ENCODE measurements at regions of chr19 and their contacts with region 1.

Region 1: DNA sequence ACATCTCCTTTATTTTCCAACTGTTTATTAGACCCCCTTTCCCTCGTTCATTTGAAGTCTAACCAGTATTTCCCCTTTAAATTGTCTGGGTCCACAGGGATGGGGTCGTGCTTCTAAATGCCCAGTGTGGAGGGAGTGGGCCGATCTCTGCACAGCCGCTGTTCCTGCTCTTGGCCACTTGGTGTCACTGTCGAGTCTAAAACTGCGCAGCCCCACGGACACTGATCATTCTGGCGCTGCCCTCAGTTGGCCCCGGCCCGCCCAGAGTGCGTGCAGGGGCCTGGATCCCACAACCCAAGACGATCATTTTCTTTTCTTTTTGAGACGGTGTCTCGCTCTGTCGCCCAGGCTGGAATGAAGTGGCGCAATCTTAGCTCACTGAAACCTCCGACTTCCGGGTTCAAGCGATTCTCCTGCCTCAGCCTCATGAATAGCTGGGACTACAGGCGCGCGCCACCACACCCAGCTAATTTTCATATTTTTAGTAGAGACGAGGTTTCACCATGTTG is 12.0 kb downstream of the WDR88 start:
- DNase-seq: peak; percentile 71
- H3K4me3 Mint-ChIP-seq: peak overlapping the region; percentile 4
- H3K27ac Mint-ChIP-seq: no peak overlapping the region
- H3K4me1 Mint-ChIP-seq: peaks cover 7% of the 10 kb centered on the region
- H3K27me3 Mint-ChIP-seq: peaks cover 48% of the 10 kb centered on the region
- CTCF ChIP-seq: peak; percentile 96

Region 2: DNA sequence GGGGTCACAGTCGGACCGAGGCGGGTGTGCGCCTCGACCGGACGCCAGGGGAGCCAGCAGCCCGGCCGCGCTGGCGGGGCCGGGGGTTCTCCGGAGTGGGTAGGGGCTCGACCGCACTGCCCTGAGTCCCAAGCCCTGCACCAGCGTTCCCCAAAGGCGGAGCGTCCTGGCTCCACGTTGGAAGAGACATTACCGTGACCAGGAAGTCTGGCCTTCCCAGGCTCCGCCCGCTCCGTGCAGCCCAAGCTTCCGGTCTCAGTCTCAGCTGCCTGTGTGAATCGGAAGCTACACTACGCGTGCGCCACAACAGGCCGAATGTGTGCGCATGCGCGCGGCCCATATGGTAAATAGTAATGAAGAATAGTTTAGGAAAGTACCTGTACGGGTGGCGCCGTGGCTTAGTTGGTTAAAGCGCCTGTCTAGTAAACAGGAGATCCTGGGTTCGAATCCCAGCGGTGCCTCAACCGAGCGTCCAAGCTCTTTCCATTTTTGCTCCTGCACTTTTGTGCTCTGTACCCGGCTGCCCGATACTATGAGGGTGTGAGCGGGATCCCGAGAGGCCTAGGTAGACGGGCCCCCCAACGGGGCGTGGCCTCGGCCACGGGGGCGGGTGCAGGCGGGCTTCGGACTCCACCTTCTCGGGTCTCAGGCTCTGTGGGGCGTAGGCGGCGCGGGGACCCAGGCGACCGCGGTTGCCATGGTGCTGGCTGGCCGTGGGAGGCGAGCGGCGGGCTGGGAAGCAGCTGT is 32.9 kb after region 1 on chr19:
- CTCF ChIA-PET with region 1: interaction called, 10 read pairs
- intact Hi-C with region 1: no loop called
- DNase-seq: peak; percentile 100
- H3K4me3 Mint-ChIP-seq: peak overlapping the region; percentile 97
- H3K27ac Mint-ChIP-seq: peak overlapping the region; percentile 100
- H3K4me1 Mint-ChIP-seq: peaks cover 39% of the 10 kb centered on the region
- H3K27me3 Mint-ChIP-seq: peaks cover 15% of the 10 kb centered on the region
- CTCF ChIP-seq: peak; percentile 26

Region 3: GRCh38 chr19:33186431-33187182 is 42.7 kb after region 1 on chr19:
- CTCF ChIA-PET with region 1: interaction called, 11 read pairs
- intact Hi-C with region 1: loop called (anchors 1 kb)
- DNase-seq: no peak
- H3K4me3 Mint-ChIP-seq: no peak overlapping the region
- H3K27ac Mint-ChIP-seq: no peak overlapping the region
- H3K4me1 Mint-ChIP-seq: no peaks in the 10 kb centered on the region
- H3K27me3 Mint-ChIP-seq: peaks cover 26% of the 10 kb centered on the region
- CTCF ChIP-seq: no peak

Measured in Calu3 (cell line).